Right cardiac atrium (tissue), 5 donors: ENCODE measurements at regions of chr19 and their contacts with region 1.

Region 1: GRCh38 chr19:52139252-52140031 is at the start of gene ZNF616:
- DNase-seq: peak; percentile 98 to 99 (median 98)
- ATAC-seq: peak; percentile 97
- H3K4me3 ChIP-seq: peak within 1 kb of the TSS; percentile 69
- H3K27ac ChIP-seq: peak within 1 kb of the TSS; percentile 65
- H3K4me1 ChIP-seq: no peaks in the 10 kb centered on the region
- H3K27me3 ChIP-seq: no peaks in the 10 kb centered on the region
- total RNA-seq, gene ZNF616: 5.7 to 8.2 (median 6.6) TPM

Region 2: GRCh38 chr19:52189735-52190486 is 50.5 kb after region 1 on chr19 and contains the start of gene PPP2R1A:
- intact Hi-C with region 1: loop called in 2 of 4 experiments (anchors 2 to 5 kb)
- DNase-seq: peak; percentile 99 to 100 (median 100)
- ATAC-seq: peak; percentile 96 to 97
- H3K4me3 ChIP-seq: peak within 1 kb of the TSS; percentile 78
- H3K27ac ChIP-seq: peak within 1 kb of the TSS; percentile 98
- H3K4me1 ChIP-seq: peaks cover 8% of the 10 kb centered on the region
- H3K27me3 ChIP-seq: no peaks in the 10 kb centered on the region
- total RNA-seq, gene PPP2R1A: 370 to 446 (median 409) TPM

Region 3: GRCh38 chr19:52237771-52238400 is 98.4 kb after region 1 on chr19:
- intact Hi-C with region 1: loop called (anchors 2 to 5 kb)
- DNase-seq: peak; percentile 35 to 69 (median 69)
- ATAC-seq: peak; percentile 66 to 68
- H3K4me3 ChIP-seq: no peak overlapping the region
- H3K27ac ChIP-seq: no peak overlapping the region
- H3K4me1 ChIP-seq: no peaks in the 10 kb centered on the region
- H3K27me3 ChIP-seq: no peaks in the 10 kb centered on the region

Region 4: DNA sequence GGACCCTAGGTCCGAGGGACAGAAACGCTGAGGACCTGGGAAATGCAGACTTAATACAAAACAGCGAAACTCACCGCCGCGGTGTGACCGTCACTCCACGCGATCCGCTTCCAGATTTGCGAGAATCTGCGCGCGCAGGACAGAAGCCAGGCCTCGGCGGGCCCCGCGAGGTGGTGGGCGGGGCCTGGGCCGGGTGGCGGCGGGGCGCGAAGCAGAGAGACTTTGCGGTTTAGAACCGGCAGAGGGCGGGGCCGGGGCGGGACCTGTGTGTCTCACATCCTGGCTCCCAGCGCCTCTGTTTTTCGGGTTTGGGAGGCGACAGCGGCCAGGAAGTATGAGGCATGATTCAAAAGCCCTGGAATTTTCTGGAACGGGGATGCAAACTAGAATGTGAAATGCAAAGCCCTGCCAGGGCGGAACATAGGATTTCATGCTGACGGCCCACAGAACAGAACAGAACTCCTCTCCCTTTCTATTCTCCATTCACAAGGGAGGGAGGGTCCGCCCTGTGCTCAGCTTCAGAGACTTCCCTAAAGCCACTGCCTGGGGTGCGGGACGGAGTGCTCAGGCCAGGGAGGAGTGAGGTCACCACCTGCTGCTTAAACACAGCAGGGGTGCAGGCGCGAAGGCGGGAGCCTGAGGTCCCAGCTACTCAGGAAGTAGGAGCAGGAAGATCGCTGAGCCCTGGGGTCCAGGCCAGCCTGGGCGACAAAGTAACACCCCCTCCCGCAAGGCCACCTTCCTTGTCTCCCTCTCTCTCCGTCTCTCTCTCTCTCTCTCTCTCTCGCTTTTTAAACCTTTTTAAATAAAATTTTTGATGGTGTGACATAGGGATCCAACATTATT is 551.1 kb after region 1 on chr19:
- intact Hi-C with region 1: no loop called
- DNase-seq: peak; percentile 97 to 99 (median 98)
- ATAC-seq: peak; percentile 100
- H3K4me3 ChIP-seq: peak overlapping the region; percentile 62
- H3K27ac ChIP-seq: peak overlapping the region; percentile 75
- H3K4me1 ChIP-seq: no peaks in the 10 kb centered on the region
- H3K27me3 ChIP-seq: no peaks in the 10 kb centered on the region

Region 5: GRCh38 chr19:52700673-52701072 is 561.2 kb after region 1 on chr19:
- intact Hi-C with region 1: no loop called
- DNase-seq: no peak
- ATAC-seq: no peak
- H3K4me3 ChIP-seq: no peak overlapping the region
- H3K27ac ChIP-seq: no peak overlapping the region
- H3K4me1 ChIP-seq: no peaks in the 10 kb centered on the region
- H3K27me3 ChIP-seq: no peaks in the 10 kb centered on the region